ENCODE measurements at regions of chr16 and their contacts with region 1.

Region 1: DNA sequence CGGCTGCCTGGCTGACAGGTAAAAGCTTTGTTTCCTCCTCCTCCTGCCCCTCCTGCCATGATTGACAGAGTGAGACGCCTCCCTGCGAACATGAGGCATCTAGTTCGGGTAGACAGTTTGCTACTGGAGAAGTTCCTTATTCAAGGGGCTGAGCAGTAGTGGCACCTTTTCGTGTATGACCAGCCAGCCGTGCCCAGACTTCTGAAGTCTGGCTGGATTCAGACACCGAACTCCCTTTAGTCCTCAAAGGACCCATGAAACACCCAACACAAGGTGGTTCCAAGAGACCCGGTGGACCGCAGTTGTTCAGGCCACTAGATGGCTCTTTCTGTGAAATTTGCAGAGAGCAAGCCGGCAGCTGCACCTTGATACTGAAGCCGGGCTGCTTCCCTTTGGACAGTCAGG is 192.8 kb downstream of the XYLT1 start:
- DNase-seq: peak in 1 of 2 experiments; percentile 59
- H3K4me3 ChIP-seq: no peak overlapping the region
- H3K27ac ChIP-seq: no peak overlapping the region
- H3K4me1 ChIP-seq: peaks cover 0 to 5% (median 2%) of the 10 kb centered on the region in 4 experiments; a peak in 6 of 7 replicates
- H3K27me3 ChIP-seq: no peaks in the 10 kb centered on the region
- CTCF ChIP-seq: peak; percentile 52 to 67 (median 66)
- EP300 ChIP-seq: no peak
- POLR2A ChIP-seq: no peak
- RAD21 ChIP-seq: peak; percentile 51 to 75

Region 2: DNA sequence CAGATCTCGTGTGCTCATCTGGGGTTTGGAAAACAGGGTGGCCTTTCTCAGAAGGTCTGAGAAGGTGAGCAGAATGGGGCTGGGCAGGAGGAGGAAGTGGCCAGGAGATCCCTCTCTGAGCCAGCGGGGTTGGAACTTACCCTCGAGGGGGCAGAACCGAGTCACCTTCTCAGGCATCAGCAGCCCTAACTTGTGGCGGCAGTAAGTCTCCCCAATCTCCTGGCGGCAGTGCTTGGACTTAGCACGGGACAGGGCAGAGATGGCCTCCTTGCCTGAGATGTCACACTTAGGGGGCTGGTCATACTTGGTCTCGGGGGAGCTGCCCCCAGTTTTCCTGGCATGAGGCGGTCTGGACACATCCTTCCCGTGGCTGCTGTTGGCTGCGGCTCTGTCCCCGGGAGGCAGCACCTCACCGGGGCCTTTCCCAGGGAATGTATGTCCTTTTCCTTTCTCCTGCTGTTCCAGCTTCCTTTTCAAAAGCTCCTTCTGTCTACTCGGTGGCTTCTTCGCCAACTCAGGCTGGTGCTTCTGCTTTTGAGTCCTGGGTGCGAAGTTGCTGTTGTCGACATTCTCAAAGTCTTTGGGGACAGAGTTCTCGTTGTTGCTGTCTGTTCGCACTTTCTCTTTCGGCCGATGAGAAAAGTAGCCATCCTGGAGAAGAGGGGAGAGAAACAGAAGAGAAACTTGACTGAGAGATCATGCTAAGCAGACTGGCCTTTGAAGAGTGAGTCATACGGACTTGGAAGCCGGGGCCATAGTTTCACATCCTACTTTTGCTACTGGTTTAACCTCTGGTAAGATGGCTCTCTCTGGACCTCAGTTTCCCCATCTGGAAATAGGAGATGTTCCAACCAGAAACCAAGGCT is 18.9 kb before region 1 on chr16:
- CTCF ChIA-PET with region 1: interaction called, 15 read pairs
- POLR2A ChIA-PET with region 1: interaction called, 3 read pairs
- DNase-seq: no peak
- H3K4me3 ChIP-seq: no peak overlapping the region
- H3K27ac ChIP-seq: no peak overlapping the region
- H3K4me1 ChIP-seq: peaks cover 0 to 3% (median 0%) of the 10 kb centered on the region in 4 experiments; a peak in 1 of 7 replicates
- H3K27me3 ChIP-seq: no peaks in the 10 kb centered on the region
- CTCF ChIP-seq: peak; percentile 22 to 43 (median 40); a peak in 3 of 4 replicates
- EP300 ChIP-seq: no peak
- POLR2A ChIP-seq: no peak
- RAD21 ChIP-seq: peak; percentile 10 to 36; a peak in 3 of 4 replicates

Region 3: GRCh38 chr16:17301593-17302135 is 23.7 kb after region 1 on chr16:
- CTCF ChIA-PET with region 1: interaction called, 23 read pairs
- POLR2A ChIA-PET with region 1: interaction called, 3 read pairs
- DNase-seq: no peak
- H3K4me3 ChIP-seq: no peak overlapping the region
- H3K27ac ChIP-seq: no peak overlapping the region
- H3K4me1 ChIP-seq: peaks cover 5 to 36% (median 16%) of the 10 kb centered on the region in 4 experiments
- H3K27me3 ChIP-seq: no peaks in the 10 kb centered on the region
- CTCF ChIP-seq: no peak
- EP300 ChIP-seq: no peak
- POLR2A ChIP-seq: no peak
- RAD21 ChIP-seq: no peak

Region 4: DNA sequence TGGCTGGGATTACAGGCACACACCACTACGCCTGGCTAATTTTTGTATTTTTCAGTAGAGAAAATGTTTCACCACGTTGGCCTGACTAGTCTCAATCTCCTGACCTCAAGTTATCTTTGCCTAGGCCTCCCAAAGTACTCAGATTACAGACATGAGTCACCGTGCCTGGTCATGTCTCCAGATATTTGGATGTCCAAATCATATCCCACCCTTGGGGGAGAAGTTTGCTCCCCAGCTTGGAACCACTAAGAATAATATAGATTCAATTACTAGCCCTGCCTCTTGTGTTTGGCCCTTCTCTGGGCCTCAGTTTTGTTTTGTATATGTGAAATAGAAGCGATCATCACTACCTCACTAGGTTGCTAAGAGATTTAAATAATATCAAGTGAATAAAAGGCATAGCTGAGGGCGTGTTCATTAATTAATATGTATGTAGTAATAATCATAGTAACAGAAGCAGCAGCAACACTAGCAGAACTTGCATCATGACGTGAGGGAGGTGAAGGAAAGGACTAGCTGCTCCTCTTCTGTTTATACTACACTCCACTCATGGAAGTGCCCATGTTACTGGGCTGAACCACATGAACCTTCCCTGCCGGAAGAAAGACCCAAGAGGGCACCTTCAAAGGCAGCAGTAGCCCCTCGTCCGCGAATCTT is 446.4 kb after region 1 on chr16:
- CTCF ChIA-PET with region 1: no interaction called
- POLR2A ChIA-PET with region 1: no interaction called
- DNase-seq: no peak
- H3K4me3 ChIP-seq: no peak overlapping the region
- H3K27ac ChIP-seq: no peak overlapping the region
- H3K4me1 ChIP-seq: no peaks in the 10 kb centered on the region
- H3K27me3 ChIP-seq: no peaks in the 10 kb centered on the region
- CTCF ChIP-seq: no peak
- EP300 ChIP-seq: no peak
- POLR2A ChIP-seq: no peak
- RAD21 ChIP-seq: no peak

Measured in H1 (cell line).